ENCODE measurements at regions of chr4 and their contacts with region 1.

Region 1: GRCh38 chr4:75950213-75950815 is 9.5 kb upstream of the NAAA start:
- DNase-seq: peak; percentile 41
- ATAC-seq: peak; percentile 73
- H3K4me3 ChIP-seq: no peak overlapping the region
- H3K27ac ChIP-seq: no peak overlapping the region
- H3K4me1 ChIP-seq: no peaks in the 10 kb centered on the region; the same call in 1 of the 2 replicates
- H3K27me3 ChIP-seq: no peaks in the 10 kb centered on the region
- CTCF ChIP-seq: no peak
- POLR2A ChIP-seq: no peak
- RAD21 ChIP-seq: no peak

Region 2: GRCh38 chr4:75786526-75786925 is 163.8 kb before region 1 on chr4:
- CTCF ChIA-PET with region 1: no interaction called
- POLR2A ChIA-PET with region 1: no interaction called
- dilution Hi-C with region 1: no loop called
- in situ Hi-C with region 1: loop called (anchors 25 kb)
- intact Hi-C with region 1: no loop called
- DNase-seq: no peak
- ATAC-seq: no peak
- H3K4me3 ChIP-seq: no peak overlapping the region
- H3K27ac ChIP-seq: no peak overlapping the region
- H3K4me1 ChIP-seq: 0 out of 2 replicates have a peak, but pooled peaks cover 1% of the 10 kb centered on the region
- H3K27me3 ChIP-seq: no peaks in the 10 kb centered on the region
- CTCF ChIP-seq: no peak
- POLR2A ChIP-seq: no peak
- RAD21 ChIP-seq: no peak